AG04450 (cell line): ENCODE measurements at regions of chr15 and their contacts with region 1.

Region 1: GRCh38 chr15:63402498-63403253 is 21.0 kb upstream of the CA12 start:
- DNase-seq: no peak
- H3K4me3 ChIP-seq: no peak overlapping the region
- H3K27ac ChIP-seq: no peak overlapping the region
- H3K27me3 ChIP-seq: no peaks in the 10 kb centered on the region
- CTCF ChIP-seq: peak; percentile 67

Region 2: GRCh38 chr15:63122002-63122893 is 280.4 kb before region 1 on chr15:
- CTCF ChIA-PET with region 1: interaction called, 17 read pairs
- POLR2A ChIA-PET with region 1: no interaction called
- DNase-seq: no peak
- H3K4me3 ChIP-seq: peak overlapping the region; percentile 79
- H3K27ac ChIP-seq: no peak overlapping the region
- H3K27me3 ChIP-seq: no peaks in the 10 kb centered on the region
- CTCF ChIP-seq: no peak

Region 3: DNA sequence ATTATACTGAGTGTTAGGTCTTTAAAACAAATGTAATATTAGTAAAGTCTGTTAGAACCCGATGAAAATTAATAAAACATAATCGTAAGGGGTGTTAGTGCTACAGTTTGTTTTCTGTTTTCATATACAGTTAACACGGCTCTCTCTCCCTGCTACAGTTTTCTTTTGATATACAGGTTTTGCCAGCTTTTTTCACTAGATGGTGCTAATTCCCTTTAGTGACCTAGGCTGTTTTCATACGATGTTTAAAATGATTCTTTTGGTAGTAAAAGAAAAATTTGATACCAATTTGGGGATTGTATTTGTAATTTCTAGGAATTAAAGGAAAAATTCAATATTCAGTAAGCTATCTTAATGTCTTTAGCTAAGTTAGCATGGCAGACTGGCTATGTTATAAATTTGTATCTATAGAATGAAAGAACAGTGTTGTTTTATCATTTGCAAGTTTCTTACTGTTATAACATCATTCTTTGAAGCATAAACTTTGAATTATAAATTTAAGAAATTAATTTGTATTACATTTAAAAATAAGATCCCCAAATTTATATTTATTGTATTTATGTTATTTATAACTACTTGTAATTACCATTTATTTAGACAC is 113.8 kb before region 1 on chr15:
- CTCF ChIA-PET with region 1: interaction called, 55 read pairs
- POLR2A ChIA-PET with region 1: no interaction called
- DNase-seq: no peak
- H3K4me3 ChIP-seq: no peak overlapping the region
- H3K27ac ChIP-seq: no peak overlapping the region
- H3K27me3 ChIP-seq: no peaks in the 10 kb centered on the region
- CTCF ChIP-seq: peak; percentile 77